Dorsolateral prefrontal cortex (tissue), 120 donors: ENCODE measurements at regions of chr10 and their contacts with region 1.

Region 1: DNA sequence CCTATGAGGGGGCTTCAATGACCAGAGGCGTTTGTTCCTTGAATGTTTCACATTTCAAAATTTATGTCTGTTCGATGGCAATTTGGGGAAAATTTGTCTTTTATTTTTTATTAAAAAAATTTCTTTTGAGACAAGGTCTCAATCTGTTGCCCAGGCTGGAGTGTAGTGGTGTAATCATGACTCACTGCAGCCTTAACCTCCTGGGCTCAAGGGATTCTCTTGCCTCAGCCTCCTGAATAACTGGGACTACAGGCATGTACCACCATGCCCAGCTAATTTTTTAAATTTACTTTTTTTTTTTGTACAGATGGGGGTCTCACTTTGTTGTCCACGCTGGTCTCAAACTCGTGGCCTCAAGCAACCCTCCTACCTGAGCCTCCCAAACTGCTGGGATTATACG is 39.7 kb downstream of the OTUD1 start:
- DNase-seq: no peak
- H3K4me3 ChIP-seq: no peak overlapping the region
- H3K27ac ChIP-seq: no peak overlapping the region
- H3K27me3 ChIP-seq: no peaks in the 10 kb centered on the region
- CTCF ChIP-seq: no peak

Region 2: GRCh38 chr10:23438550-23439441 is 39.8 kb before region 1 on chr10 and contains the start of gene OTUD1:
- intact Hi-C with region 1: no loop called
- DNase-seq: peak; percentile 93 to 98 (median 95)
- H3K4me3 ChIP-seq: peak within 1 kb of the TSS; percentile 64 to 97 (median 83)
- H3K27ac ChIP-seq: peak within 1 kb of the TSS; percentile 77 to 99 (median 97)
- H3K27me3 ChIP-seq: no peaks in the 10 kb centered on the region
- CTCF ChIP-seq: peak in 39 of 56 donors; percentile 10 to 60 (median 26)
- total RNA-seq, gene OTUD1: 10.0 to 23.3 (median 14.7) TPM

Region 3: GRCh38 chr10:23795731-23796130 is 317.2 kb after region 1 on chr10:
- intact Hi-C with region 1: loop called in 1 of 2 experiments (anchors 5 kb)
- DNase-seq: no peak
- H3K4me3 ChIP-seq: no peak overlapping the region
- H3K27ac ChIP-seq: no peak overlapping the region
- H3K27me3 ChIP-seq: peaks cover 0 to 6% (median 0%) of the 10 kb centered on the region in 45 donors
- CTCF ChIP-seq: no peak